HCT116 (cell line): ENCODE measurements at regions of chr1 and their contacts with region 1.

Region 1: DNA sequence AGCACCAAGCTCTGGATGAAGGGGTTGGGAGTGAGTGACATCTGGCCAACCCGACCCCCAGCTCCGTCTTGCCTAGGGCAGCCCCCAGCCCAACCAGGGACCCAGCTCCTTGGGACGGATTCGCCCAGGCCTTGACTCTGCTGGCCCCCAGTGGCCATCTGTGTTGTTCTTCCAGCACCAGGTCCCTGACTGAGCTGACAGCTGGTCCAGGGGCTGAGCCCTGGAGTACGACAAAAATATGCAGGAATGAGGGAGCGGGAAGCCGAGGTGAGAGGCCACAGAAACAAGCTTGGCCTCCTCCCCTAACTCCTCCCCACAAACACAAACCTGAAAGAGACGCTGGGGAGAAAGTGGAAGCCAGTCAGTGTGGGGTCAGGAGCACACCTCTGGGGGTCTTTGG is 55.0 kb upstream of the PAX7 start:
- DNase-seq: peak; percentile 38
- ATAC-seq: peak; percentile 91
- H3K4me3 ChIP-seq: no peak overlapping the region
- H3K27ac ChIP-seq: no peak overlapping the region
- H3K4me1 ChIP-seq: peaks cover 0 to 4% of the 10 kb centered on the region in 2 experiments; a peak in 1 of 4 replicates
- H3K27me3 ChIP-seq: peaks cover 5% of the 10 kb centered on the region; the same call in 1 of the 2 replicates
- CTCF ChIP-seq: peak; percentile 71 to 94 (median 91)
- POLR2A ChIP-seq: no peak
- RAD21 ChIP-seq: peak; percentile 88

Region 2: DNA sequence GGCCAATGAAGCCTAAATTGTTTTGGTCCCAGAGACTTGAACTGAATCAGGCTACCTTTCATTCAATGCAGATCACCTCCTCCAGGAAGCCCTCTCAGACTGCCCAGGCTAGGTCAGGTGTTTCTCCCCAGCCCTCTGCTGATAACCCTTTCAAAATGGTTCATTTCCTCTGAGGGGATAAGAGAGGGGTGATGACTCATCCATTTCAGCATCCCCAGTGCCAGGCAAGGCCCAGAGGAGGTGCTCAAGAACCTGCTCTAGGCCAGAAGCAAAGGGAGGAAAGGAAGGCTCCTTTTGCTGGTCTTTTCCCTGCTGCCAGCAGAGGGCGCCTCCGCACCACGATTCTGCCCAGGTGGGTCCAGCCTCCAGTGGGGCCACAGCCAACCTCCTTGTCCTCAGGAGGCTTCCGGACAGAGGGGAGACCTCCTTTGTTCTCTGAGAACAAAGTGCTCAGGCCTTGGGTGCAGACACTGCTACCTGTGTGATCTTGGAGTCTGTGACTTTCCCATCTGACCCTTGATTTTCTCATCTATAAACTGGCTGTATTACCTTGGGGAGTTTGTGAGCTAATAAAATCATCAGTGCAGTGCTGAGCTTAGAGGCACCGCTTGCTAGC is 1081.4 kb before region 1 on chr1:
- CTCF ChIA-PET with region 1: no interaction called
- POLR2A ChIA-PET with region 1: no interaction called
- RAD21 ChIA-PET with region 1: no interaction called
- intact Hi-C with region 1: loop called (anchors 10 kb)
- DNase-seq: peak; percentile 86
- ATAC-seq: peak; percentile 94
- H3K4me3 ChIP-seq: no peak overlapping the region
- H3K27ac ChIP-seq: no peak overlapping the region
- H3K4me1 ChIP-seq: peaks cover 21 to 44% of the 10 kb centered on the region in 2 experiments; a peak in 3 of 4 replicates
- H3K27me3 ChIP-seq: no peaks in the 10 kb centered on the region
- CTCF ChIP-seq: peak; percentile 97 to 99 (median 98)
- POLR2A ChIP-seq: no peak
- RAD21 ChIP-seq: peak; percentile 98

Region 3: DNA sequence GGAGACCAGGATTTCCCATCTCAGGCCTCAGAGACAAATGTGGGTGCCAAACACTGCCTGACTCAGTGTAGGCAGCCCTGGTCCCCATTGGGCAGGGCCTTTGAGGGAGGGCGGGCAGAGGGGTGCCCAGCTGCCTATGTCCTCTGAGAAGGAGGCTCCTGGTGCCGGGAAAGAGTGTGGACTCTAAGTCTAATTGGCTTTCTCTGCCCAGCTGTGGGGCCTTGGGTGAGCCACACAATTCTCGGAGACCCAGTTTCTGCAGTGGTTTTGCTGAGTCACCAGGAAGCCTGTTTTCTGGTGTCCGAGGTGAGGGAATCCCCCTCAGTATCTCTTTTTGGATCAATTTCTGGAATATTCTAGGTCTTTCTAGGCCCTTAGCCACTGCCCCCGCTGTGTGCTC is 855.7 kb before region 1 on chr1:
- CTCF ChIA-PET with region 1: no interaction called
- POLR2A ChIA-PET with region 1: no interaction called
- RAD21 ChIA-PET with region 1: no interaction called
- intact Hi-C with region 1: no loop called
- DNase-seq: no peak
- ATAC-seq: no peak
- H3K4me3 ChIP-seq: no peak overlapping the region
- H3K27ac ChIP-seq: no peak overlapping the region
- H3K4me1 ChIP-seq: peaks cover under 1 to 12% of the 10 kb centered on the region in 2 experiments; a peak in 3 of 4 replicates
- H3K27me3 ChIP-seq: no peaks in the 10 kb centered on the region
- CTCF ChIP-seq: no peak
- POLR2A ChIP-seq: no peak
- RAD21 ChIP-seq: no peak

Region 4: DNA sequence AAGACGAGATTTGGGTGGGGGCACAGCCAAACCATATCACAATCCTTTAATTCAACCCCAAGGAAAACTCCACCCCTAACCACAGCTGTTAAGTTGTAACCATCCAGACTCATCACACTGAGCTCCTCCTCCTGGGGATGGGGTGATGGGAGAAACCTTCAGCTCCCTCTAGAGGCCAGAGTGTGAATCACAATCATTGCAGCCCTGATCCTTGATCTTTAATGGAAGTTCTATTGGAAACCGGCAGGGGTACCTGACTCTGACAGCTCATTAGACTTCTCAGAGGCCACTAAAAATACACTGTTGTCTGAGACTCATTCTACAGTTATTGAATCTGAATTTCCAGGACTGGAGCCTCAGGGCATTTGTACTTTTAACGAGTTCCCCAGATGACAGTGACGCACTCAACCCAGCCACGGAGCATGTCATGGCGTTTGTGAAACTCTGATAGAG is 340.8 kb before region 1 on chr1:
- CTCF ChIA-PET with region 1: interaction called, 12 read pairs
- POLR2A ChIA-PET with region 1: no interaction called
- RAD21 ChIA-PET with region 1: no interaction called
- intact Hi-C with region 1: no loop called
- DNase-seq: peak; percentile 73
- ATAC-seq: peak; percentile 99
- H3K4me3 ChIP-seq: no peak overlapping the region
- H3K27ac ChIP-seq: no peak overlapping the region
- H3K4me1 ChIP-seq: no peaks in the 10 kb centered on the region
- H3K27me3 ChIP-seq: peaks cover 36% of the 10 kb centered on the region
- CTCF ChIP-seq: peak; percentile 61 to 92 (median 90)
- POLR2A ChIP-seq: no peak
- RAD21 ChIP-seq: peak; percentile 50

Region 5: GRCh38 chr1:18299441-18300338 is 275.9 kb before region 1 on chr1:
- CTCF ChIA-PET with region 1: interaction called, 7 read pairs
- POLR2A ChIA-PET with region 1: no interaction called
- RAD21 ChIA-PET with region 1: no interaction called
- intact Hi-C with region 1: loop called (anchors 1 kb)
- DNase-seq: peak; percentile 10
- ATAC-seq: peak; percentile 77
- H3K4me3 ChIP-seq: no peak overlapping the region
- H3K27ac ChIP-seq: no peak overlapping the region
- H3K4me1 ChIP-seq: no peaks in the 10 kb centered on the region
- H3K27me3 ChIP-seq: peaks cover 49% of the 10 kb centered on the region
- CTCF ChIP-seq: peak; percentile 60 to 91 (median 83)
- POLR2A ChIP-seq: no peak
- RAD21 ChIP-seq: peak; percentile 49

Region 6: GRCh38 chr1:18556364-18556763 is 19.3 kb before region 1 on chr1:
- CTCF ChIA-PET with region 1: interaction called, 32 read pairs
- POLR2A ChIA-PET with region 1: no interaction called
- RAD21 ChIA-PET with region 1: interaction called in 1 of 2 experiments, 7 read pairs
- intact Hi-C with region 1: no loop called
- DNase-seq: peak; percentile 44
- ATAC-seq: peak; percentile 71
- H3K4me3 ChIP-seq: no peak overlapping the region
- H3K27ac ChIP-seq: no peak overlapping the region
- H3K4me1 ChIP-seq: no peaks in the 10 kb centered on the region
- H3K27me3 ChIP-seq: peaks cover 7% of the 10 kb centered on the region; the same call in 1 of the 2 replicates
- CTCF ChIP-seq: peak; percentile 38 to 67 (median 58); a peak in 5 of 6 replicates
- POLR2A ChIP-seq: no peak
- RAD21 ChIP-seq: no peak

Region 7: GRCh38 chr1:18564676-18565075 is 10.9 kb before region 1 on chr1:
- CTCF ChIA-PET with region 1: interaction called, 30 read pairs
- POLR2A ChIA-PET with region 1: no interaction called
- RAD21 ChIA-PET with region 1: interaction called in 1 of 2 experiments, 3 read pairs
- intact Hi-C with region 1: no loop called
- DNase-seq: no peak
- ATAC-seq: no peak
- H3K4me3 ChIP-seq: no peak overlapping the region
- H3K27ac ChIP-seq: no peak overlapping the region
- H3K4me1 ChIP-seq: no peaks in the 10 kb centered on the region
- H3K27me3 ChIP-seq: 0 out of 2 replicates have a peak, but pooled peaks cover 3% of the 10 kb centered on the region
- CTCF ChIP-seq: no peak
- POLR2A ChIP-seq: no peak
- RAD21 ChIP-seq: no peak